HCT116 (cell line): ENCODE measurements at regions of chr1 and their contacts with region 1.

Region 1: GRCh38 chr1:21963477-21964217 is 13.2 kb upstream of the CELA3B start:
- DNase-seq: peak; percentile 47
- ATAC-seq: peak; percentile 91
- H3K4me3 ChIP-seq: no peak overlapping the region
- H3K27ac ChIP-seq: no peak overlapping the region
- H3K4me1 ChIP-seq: peaks cover 3 to 13% of the 10 kb centered on the region in 2 experiments; a peak in 3 of 4 replicates
- H3K27me3 ChIP-seq: no peaks in the 10 kb centered on the region
- CTCF ChIP-seq: peak; percentile 91 to 97 (median 92)
- POLR2A ChIP-seq: no peak
- RAD21 ChIP-seq: peak; percentile 99

Region 2: DNA sequence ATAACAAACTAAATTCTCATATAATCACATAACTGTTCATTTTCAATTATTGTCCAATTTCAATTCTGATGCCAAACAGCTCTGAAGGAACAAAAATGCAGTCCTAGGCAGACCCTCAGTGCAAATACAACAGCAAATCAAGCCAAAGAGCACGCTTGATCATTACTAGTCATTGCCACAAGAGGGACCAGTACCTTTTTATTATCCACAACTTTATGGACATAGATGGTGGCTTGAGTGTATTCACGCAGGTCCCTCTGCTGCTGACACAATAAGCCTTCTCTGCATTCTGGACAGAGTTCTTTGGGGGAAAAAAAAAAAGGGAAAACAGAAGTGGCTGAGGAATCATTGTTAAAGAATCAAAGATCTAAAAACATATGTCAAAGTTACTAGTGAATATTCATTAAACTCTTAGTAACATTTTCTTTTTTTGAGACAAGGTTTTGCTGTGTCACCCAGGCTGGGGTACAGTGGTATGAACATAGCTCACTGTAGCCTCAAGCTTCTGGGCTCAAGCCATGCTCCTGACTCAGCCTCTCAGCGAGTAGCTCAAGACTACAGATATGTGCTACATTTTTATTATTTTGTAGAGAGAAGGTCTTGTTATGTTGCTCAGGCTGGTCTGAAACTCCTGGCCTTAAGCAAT is 260.2 kb before region 1 on chr1:
- CTCF ChIA-PET with region 1: no interaction called
- POLR2A ChIA-PET with region 1: no interaction called
- RAD21 ChIA-PET with region 1: no interaction called
- intact Hi-C with region 1: loop called (anchors 1 kb)
- DNase-seq: peak; percentile 26
- ATAC-seq: peak; percentile 87
- H3K4me3 ChIP-seq: no peak overlapping the region
- H3K27ac ChIP-seq: peak overlapping the region; percentile 25; the same call in 1 of the 2 replicates
- H3K4me1 ChIP-seq: no peaks in the 10 kb centered on the region
- H3K27me3 ChIP-seq: no peaks in the 10 kb centered on the region
- CTCF ChIP-seq: peak; percentile 51 to 64 (median 54); a peak in 5 of 6 replicates
- POLR2A ChIP-seq: no peak
- RAD21 ChIP-seq: peak; percentile 61

Region 3: DNA sequence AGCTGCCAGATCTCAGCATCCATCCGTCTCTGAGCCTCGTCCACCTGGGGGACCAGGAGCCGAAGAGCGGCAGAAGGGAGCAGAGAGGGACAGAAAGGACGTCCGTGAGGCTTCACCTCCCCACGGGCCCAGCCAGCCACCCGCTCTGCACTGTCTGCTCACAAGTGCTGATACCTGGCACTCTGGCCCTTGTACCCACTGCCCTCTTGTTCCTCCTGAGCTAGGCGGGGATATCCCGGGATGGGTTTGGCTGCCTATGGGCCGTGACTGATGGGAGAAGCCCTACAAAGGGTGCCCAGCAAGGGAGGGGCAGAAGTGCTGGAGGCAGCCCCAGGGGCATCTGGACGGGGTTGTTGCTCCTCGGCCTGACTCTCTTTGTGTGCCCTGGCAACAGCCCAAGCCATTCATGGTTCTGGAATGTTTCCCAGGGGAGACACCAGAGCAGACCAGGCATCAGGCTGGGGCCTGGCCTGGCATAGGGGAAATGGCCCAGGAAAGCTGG is 94.0 kb before region 1 on chr1:
- CTCF ChIA-PET with region 1: no interaction called
- POLR2A ChIA-PET with region 1: no interaction called
- RAD21 ChIA-PET with region 1: no interaction called
- intact Hi-C with region 1: loop called (anchors 5 kb)
- DNase-seq: peak; percentile 18
- ATAC-seq: peak; percentile 71
- H3K4me3 ChIP-seq: no peak overlapping the region
- H3K27ac ChIP-seq: no peak overlapping the region
- H3K4me1 ChIP-seq: peaks cover 20 to 30% of the 10 kb centered on the region in 2 experiments
- H3K27me3 ChIP-seq: no peaks in the 10 kb centered on the region
- CTCF ChIP-seq: no peak
- POLR2A ChIP-seq: no peak
- RAD21 ChIP-seq: no peak

Region 4: DNA sequence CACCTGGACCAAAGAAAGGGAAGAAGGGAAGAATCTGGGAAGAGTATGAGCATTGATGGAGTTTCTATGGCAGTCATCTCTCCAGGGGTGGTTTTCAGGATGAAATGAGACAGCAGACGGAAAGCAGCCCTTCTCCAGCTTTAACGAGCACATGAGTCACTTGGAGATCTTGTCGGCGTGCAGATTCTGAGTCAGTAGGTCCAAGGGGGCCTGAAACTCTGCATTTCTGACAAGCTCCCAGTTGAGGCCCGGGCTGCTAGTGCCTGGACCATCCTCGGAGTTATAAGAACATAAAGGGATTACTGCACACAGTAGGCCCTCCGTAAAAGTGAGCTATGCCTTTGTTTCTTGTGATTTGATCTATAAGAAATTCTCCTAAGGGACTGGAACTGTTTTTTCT is 44.1 kb before region 1 on chr1:
- CTCF ChIA-PET with region 1: no interaction called
- POLR2A ChIA-PET with region 1: no interaction called
- RAD21 ChIA-PET with region 1: no interaction called
- intact Hi-C with region 1: no loop called
- DNase-seq: no peak
- ATAC-seq: peak; percentile 70
- H3K4me3 ChIP-seq: no peak overlapping the region
- H3K27ac ChIP-seq: no peak overlapping the region
- H3K4me1 ChIP-seq: peaks cover 13 to 52% of the 10 kb centered on the region in 2 experiments
- H3K27me3 ChIP-seq: no peaks in the 10 kb centered on the region
- CTCF ChIP-seq: no peak
- POLR2A ChIP-seq: no peak
- RAD21 ChIP-seq: no peak